ENCODE measurements at regions of chr11 and their contacts with region 1.

Region 1: GRCh38 chr11:64846998-64847666 is 2.7 kb upstream of the CDC42BPG start:
- DNase-seq: peak; percentile 94
- ATAC-seq: peak; percentile 70
- H3K4me3 Mint-ChIP-seq: no peak overlapping the region
- H3K27ac Mint-ChIP-seq: peak overlapping the region; percentile 6
- H3K4me1 Mint-ChIP-seq: peaks cover 61% of the 10 kb centered on the region
- H3K27me3 Mint-ChIP-seq: no peaks in the 10 kb centered on the region

Region 2: DNA sequence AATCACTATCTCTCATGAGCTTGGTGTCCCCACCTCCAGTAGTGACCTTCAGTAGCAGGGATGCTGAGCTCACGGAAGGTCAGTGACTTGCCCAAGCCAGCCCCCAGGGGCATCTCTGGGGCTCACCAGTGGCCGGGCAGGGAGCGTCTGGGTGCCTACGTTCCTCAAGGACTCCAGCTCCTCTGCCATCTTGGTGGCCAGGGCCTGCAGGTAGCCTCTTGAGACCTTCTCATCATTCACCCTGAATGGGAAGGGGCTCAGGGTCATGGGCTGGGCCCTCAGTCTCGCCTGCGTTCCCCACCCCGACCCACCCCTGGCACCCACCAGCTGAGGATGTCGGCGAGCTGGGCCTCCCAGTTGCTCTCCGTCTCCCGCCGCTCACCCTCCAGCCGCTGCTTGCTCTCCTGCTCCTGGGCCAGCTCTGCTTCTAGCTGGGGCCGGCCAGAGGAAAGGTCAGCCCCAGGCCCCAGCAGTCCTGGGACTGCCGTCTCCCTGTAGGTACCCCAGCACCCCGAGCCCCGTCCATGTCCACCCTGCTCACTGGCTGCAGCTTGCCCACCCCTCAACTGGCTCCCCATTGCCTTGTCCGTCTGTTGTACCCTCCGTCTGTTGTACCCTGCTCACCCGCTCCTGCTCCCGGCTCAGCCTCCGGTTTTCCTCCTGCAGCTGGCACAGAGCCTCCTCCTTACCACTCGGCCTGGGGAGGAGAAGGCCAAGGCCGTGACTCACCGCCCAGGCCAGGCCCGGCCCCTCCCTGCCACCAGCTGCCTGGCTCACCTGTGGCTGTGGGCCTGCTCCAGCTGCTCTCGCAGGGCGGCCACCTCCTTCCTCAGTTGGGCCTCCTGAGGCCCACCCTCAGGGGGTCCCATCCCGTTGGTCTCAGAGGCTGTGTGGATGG is 12.2 kb before region 1 on chr11:
- CTCF ChIA-PET with region 1: interaction called, 31 read pairs
- POLR2A ChIA-PET with region 1: no interaction called
- DNase-seq: no peak
- ATAC-seq: no peak
- H3K4me3 Mint-ChIP-seq: no peak overlapping the region
- H3K27ac Mint-ChIP-seq: no peak overlapping the region
- H3K4me1 Mint-ChIP-seq: peaks cover 12% of the 10 kb centered on the region
- H3K27me3 Mint-ChIP-seq: no peaks in the 10 kb centered on the region

Region 3: DNA sequence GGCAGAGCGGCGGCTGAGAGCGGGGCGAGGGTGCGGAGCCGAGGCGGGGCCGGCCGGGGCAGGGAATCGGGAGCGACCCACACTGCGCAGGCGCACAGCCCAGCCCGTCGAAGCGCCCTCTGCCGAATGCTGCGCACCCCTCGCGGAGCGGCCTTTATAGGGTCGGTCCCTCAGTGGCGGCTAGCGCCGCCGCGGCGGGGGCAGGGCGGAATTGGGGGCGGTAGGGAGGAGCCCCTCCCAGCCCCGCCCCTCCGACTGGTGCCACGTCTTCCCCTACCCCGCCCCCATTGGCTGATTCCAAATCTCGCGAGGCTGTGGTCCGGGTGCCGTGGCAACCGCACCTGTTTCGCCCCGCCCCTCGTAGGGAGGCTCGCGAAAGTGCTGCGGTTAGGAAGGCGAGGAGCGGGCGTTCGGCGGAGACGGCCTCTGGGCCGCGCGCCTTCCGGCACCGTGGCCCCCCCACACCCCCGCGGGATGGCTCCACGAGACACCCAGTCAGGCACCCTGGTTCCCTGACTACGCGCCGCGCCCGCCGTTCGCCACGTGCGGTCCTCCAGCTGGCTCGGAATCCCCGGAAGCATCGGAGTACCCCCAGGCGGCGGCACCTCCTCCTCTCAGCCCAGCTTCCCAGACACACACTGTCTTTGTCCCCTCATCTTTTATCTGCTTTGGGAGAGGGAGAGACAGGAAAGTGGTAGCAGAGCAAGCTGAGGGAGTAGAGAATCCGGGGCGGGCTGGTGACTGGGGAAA is 31.5 kb after region 1 on chr11 and contains the start of gene EHD1:
- CTCF ChIA-PET with region 1: interaction called, 306 read pairs
- POLR2A ChIA-PET with region 1: interaction called, 469 read pairs
- DNase-seq: peak; percentile 100
- ATAC-seq: peak; percentile 81
- H3K4me3 Mint-ChIP-seq: peak within 1 kb of the TSS; percentile 98
- H3K27ac Mint-ChIP-seq: peak within 1 kb of the TSS; percentile 92
- H3K4me1 Mint-ChIP-seq: peaks cover 62% of the 10 kb centered on the region
- H3K27me3 Mint-ChIP-seq: no peaks in the 10 kb centered on the region
- total RNA-seq, gene EHD1: 145 to 150 TPM

Region 4: GRCh38 chr11:64894070-64894796 is 47.1 kb after region 1 on chr11:
- CTCF ChIA-PET with region 1: interaction called, 491 read pairs
- POLR2A ChIA-PET with region 1: interaction called, 27 read pairs
- DNase-seq: peak; percentile 95
- ATAC-seq: peak; percentile 98
- H3K4me3 Mint-ChIP-seq: no peak overlapping the region
- H3K27ac Mint-ChIP-seq: no peak overlapping the region
- H3K4me1 Mint-ChIP-seq: peaks cover 6% of the 10 kb centered on the region
- H3K27me3 Mint-ChIP-seq: no peaks in the 10 kb centered on the region

Region 5: GRCh38 chr11:65117216-65118096 is 270.3 kb after region 1 on chr11 and contains the start of gene ZNHIT2:
- CTCF ChIA-PET with region 1: interaction called, 27 read pairs
- POLR2A ChIA-PET with region 1: interaction called, 3 read pairs
- DNase-seq: peak; percentile 100
- ATAC-seq: peak; percentile 66
- H3K4me3 Mint-ChIP-seq: peak within 1 kb of the TSS; percentile 90
- H3K27ac Mint-ChIP-seq: peak within 1 kb of the TSS; percentile 97
- H3K4me1 Mint-ChIP-seq: peaks cover 63% of the 10 kb centered on the region
- H3K27me3 Mint-ChIP-seq: no peaks in the 10 kb centered on the region
- total RNA-seq, gene ZNHIT2: 11.6 to 12.4 TPM